GM10248 (cell line): ENCODE measurements at regions of chr14 and their contacts with region 1.

Region 1: DNA sequence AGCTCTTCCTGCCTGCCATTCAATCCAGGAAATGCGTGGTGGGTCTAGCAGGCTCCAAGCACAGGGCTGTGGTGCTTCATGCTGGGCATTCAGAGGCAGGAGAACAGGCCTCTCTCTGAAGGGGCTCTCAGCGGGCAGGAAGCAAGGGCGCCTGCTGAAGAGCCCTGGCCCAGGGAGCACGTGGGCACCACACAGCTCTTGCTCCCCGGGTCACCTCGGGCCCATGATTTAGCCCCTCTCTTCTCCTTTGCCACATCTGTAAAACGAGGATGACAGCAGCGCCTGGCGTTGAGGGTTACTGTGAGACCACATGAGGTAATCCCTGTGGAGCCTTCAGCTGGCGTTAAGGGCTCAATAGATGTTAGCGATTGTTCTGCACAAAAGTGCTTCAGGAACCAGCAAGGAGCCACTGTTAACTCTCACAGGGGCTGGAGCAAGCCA is 37.6 kb upstream of the SPTLC2 start:
- DNase-seq: no peak
- CTCF ChIP-seq: no peak

Region 2: DNA sequence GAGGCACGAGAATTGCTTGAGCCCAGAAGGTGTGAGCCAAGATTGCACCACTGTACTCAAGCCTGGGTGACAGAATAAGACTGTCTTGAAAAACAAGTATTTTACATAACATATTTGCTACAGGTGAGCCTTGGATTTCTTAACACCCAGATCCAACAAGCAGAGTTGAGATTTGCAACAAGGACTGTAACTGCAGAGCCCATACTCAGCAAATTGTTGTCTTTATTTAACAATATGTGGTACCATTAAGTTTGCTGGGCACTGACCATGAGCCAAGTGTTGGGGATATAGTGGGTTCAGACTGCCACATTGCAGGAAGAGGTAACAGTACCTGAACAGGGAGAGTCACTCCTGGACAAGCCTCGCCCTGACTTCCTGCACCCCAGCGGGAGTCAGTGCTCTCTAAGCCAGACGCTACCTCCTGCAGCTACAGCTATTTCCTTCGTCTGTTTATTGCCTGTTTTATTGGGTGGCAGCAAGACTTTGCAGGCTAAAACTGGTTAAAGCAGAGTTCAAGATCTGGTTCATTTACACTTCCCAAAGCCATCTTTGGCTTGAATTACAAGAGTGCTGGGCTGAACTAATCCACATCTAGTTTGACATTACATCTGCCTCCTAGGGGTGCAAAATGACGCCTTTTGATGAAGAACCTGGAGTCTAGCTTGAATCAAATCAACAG is 183.7 kb before region 1 on chr14:
- CTCF ChIA-PET with region 1: no interaction called
- POLR2A ChIA-PET with region 1: no interaction called
- DNase-seq: no peak
- CTCF ChIP-seq: no peak

Region 3: GRCh38 chr14:77554207-77554606 is 99.8 kb before region 1 on chr14:
- CTCF ChIA-PET with region 1: no interaction called
- POLR2A ChIA-PET with region 1: no interaction called
- DNase-seq: no peak
- CTCF ChIP-seq: no peak

Region 4: DNA sequence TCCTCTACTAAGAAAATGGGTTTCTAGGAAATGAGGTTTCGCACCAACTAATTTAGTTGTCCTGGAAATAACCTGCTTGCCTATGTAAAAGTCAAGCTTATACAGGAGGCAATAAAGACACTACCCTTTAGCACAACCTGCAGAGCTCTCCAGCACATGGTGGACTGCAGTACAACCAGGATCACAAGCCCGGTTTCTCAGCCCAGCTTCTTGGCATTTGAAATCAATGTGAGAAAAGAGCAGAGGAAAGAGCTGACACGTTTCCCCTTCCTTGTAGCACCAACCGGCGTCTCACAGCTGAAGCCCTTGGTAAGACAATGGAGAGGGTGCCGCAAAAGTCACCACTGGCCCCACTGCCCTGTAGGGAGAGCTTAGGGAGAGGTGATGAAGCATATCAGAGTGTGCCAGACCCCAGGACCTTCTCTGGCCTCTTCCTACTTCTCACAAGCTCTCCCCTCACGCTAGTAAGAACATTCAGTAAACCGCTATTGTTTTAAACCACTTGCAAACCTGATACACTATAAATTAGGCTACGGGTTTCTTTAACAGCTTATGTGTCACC is 46.2 kb before region 1 on chr14:
- CTCF ChIA-PET with region 1: no interaction called
- POLR2A ChIA-PET with region 1: no interaction called
- DNase-seq: no peak
- CTCF ChIP-seq: no peak

Region 5: DNA sequence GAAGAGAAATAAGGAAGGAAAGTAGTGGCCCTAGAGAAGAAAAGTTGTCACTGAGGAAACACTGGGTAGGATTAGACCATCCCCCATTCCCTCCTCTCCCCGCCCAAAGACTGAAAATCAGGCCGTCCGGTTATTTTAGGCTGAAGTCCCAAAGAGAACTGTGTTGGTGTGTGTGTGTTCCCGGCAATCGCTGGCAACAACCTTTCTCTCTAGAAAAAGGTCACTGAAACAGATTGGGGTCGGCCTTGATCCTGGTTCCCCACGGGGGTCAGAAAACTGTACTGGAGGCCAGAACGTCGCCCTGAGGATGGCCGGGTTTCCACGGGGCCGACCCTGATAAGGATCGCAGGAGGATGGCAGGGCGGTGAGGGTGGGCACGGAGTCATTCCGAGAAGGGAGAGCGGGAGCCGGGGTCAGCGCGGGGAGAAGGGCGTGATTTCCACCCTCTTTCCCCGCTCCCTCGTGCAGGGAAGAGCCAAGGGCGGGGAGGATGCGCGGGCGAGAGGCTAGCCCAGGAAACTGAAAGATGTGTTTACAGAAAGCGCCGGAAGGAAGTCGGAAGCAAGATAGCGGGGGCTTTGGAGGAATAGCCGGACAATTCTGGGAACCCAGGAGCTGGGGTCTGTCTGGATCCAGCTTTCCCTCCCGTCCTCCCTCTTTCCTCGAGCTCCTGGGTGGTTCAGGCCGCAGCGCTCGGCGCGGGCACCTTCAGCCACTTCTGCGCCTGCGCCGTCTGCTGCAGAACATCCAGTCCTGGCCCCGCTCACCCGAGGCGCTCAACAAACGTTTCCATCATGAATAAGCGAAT is 12.3 kb before region 1 on chr14:
- CTCF ChIA-PET with region 1: interaction called, 15 read pairs
- POLR2A ChIA-PET with region 1: no interaction called
- DNase-seq: peak; percentile 83
- CTCF ChIP-seq: no peak